ENCODE measurements at regions of chr7 and their contacts with region 1.

Region 1: GRCh38 chr7:17769918-17770317 is 170.4 kb downstream of the SNX13 start:
- DNase-seq: peak; percentile 64
- H3K4me3 ChIP-seq: no peak overlapping the region
- H3K27ac ChIP-seq: no peak overlapping the region
- H3K4me1 ChIP-seq: no peaks in the 10 kb centered on the region
- H3K27me3 ChIP-seq: no peaks in the 10 kb centered on the region
- CTCF ChIP-seq: peak; percentile 71 to 75
- POLR2A ChIP-seq: no peak

Region 2: GRCh38 chr7:17758008-17758407 is 11.9 kb before region 1 on chr7:
- CTCF ChIA-PET with region 1: interaction called, 16 read pairs
- POLR2A ChIA-PET with region 1: no interaction called
- dilution Hi-C with region 1: no loop called
- intact Hi-C with region 1: no loop called
- DNase-seq: no peak
- H3K4me3 ChIP-seq: no peak overlapping the region
- H3K27ac ChIP-seq: no peak overlapping the region
- H3K4me1 ChIP-seq: no peaks in the 10 kb centered on the region
- H3K27me3 ChIP-seq: peaks cover 0 to 2% of the 10 kb centered on the region in 2 experiments
- CTCF ChIP-seq: no peak
- POLR2A ChIP-seq: no peak

Region 3: DNA sequence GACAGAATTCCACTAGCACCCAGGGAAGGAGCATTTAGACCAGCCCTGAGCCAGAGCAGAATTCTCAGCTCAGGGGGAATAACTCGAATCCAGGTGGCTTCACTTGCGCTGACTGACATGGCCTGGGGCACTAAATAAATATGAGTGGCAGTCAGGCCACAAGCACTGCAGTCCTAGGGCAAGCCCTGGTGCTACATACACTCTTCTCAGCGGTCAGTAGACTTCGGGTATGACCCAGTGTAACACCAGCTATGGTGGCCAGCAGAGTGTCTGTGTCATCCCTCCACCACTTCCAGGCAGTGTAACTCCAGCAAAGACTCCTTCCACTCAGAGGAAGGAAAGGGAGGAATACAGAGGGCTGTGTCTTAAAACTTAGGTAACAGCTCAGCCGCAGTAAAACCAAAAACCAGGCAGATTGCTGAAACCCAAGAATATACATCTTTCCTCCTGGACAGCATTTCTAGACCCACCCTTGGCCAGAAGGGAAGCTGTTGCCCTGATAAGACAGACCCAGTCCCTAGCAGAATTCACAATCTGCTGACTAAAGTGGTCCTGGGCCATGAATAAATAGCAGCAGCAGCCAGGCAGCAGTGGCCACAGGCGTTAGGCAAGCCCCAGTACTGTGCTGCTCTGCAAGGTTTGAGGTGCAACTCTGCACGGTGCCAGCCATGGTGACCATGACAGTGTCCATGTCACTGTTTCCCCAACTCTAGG is 93.3 kb after region 1 on chr7:
- CTCF ChIA-PET with region 1: interaction called, 11 read pairs
- POLR2A ChIA-PET with region 1: no interaction called
- dilution Hi-C with region 1: no loop called
- intact Hi-C with region 1: no loop called
- DNase-seq: no peak
- H3K4me3 ChIP-seq: no peak overlapping the region
- H3K27ac ChIP-seq: no peak overlapping the region
- H3K4me1 ChIP-seq: no peaks in the 10 kb centered on the region
- H3K27me3 ChIP-seq: no peaks in the 10 kb centered on the region
- CTCF ChIP-seq: no peak
- POLR2A ChIP-seq: no peak

Region 4: DNA sequence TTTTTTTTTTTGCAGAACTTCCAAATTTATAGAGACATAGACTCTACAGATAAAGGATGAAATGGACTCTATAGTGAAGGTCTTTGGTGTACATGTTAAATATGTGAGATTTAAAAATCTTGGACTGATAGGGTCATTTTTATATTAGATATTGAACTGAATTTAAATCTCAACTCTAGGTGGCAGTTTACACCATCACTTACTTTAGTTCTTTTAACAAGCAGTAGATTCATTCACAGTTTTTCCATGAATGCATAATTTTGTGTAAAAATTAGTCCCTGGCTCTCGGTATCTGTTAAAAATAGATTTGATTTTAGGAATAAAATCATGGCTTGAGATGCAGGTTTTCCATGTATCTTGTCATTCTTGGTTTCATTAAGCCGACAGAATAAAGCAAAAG is 201.5 kb after region 1 on chr7:
- CTCF ChIA-PET with region 1: interaction called, 25 read pairs
- POLR2A ChIA-PET with region 1: no interaction called
- dilution Hi-C with region 1: no loop called
- intact Hi-C with region 1: loop called (anchors 1 kb)
- DNase-seq: peak; percentile 46
- H3K4me3 ChIP-seq: no peak overlapping the region
- H3K27ac ChIP-seq: no peak overlapping the region
- H3K4me1 ChIP-seq: no peaks in the 10 kb centered on the region
- H3K27me3 ChIP-seq: no peaks in the 10 kb centered on the region
- CTCF ChIP-seq: no peak
- POLR2A ChIP-seq: no peak

Region 5: DNA sequence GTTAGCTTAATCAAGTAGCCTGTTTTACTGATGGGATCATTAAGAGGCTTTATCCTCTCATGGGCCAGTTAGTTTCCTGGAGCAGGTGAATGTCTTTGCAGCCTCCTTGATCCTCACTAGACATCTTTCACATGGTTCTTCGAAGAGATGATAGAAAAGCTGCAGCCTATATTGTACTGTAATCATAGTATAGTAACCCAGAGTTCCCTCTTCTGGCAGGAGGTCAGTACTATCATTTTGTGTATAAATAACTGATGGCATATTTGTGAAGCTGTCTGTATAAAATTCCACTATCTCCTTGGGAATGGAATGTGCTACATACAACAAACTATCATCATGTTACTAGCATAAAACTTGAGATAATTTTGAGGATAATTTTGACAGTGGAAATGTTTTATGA is 381.5 kb after region 1 on chr7:
- CTCF ChIA-PET with region 1: interaction called, 14 read pairs
- POLR2A ChIA-PET with region 1: no interaction called
- dilution Hi-C with region 1: no loop called
- intact Hi-C with region 1: no loop called
- DNase-seq: no peak
- H3K4me3 ChIP-seq: no peak overlapping the region
- H3K27ac ChIP-seq: no peak overlapping the region
- H3K4me1 ChIP-seq: no peaks in the 10 kb centered on the region
- H3K27me3 ChIP-seq: no peaks in the 10 kb centered on the region
- CTCF ChIP-seq: no peak
- POLR2A ChIP-seq: no peak